Esophagus squamous epithelium (tissue), 5 donors: ENCODE measurements at regions of chr7 and their contacts with region 1.

Region 1: DNA sequence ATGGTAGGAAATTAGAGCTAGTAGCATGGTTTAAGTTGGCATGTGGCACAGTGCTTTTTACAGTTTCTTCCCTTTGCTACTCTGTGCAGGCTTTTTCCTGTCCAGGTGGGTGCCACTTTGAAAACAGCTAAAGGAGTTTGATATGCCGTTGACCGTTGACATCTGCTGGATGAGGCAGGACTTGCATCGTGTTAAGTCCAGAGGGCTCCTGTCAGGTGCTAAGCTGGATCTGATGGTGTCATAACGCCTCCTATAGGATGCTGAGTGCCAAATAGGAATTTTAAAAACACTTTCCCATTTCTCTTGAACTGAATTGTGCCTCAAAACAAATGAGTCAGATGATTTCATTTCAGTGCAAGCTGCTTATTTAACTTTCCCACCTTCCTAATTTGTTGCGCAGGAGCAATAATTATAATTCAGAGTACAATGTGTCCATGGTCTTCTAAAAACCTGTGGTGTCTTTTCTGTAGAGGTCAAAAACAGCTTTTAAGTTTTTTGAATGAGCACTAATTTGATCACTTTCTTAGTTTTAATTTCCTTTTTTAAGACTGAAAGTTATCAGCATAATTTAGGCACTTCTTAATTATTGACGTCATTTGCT is 178.3 kb downstream of the CDCA7L start:
- DNase-seq: no peak
- H3K4me3 ChIP-seq: no peak overlapping the region
- H3K27ac ChIP-seq: no peak overlapping the region
- H3K4me1 ChIP-seq: peaks cover 0 to 5% (median 0%) of the 10 kb centered on the region in 3 donors
- H3K27me3 ChIP-seq: peaks cover 0 to 13% (median 0%) of the 10 kb centered on the region in 4 donors
- CTCF ChIP-seq: peak in 5 of 6 experiments; percentile 24 to 73 (median 52)
- POLR2A ChIP-seq: no peak

Region 2: DNA sequence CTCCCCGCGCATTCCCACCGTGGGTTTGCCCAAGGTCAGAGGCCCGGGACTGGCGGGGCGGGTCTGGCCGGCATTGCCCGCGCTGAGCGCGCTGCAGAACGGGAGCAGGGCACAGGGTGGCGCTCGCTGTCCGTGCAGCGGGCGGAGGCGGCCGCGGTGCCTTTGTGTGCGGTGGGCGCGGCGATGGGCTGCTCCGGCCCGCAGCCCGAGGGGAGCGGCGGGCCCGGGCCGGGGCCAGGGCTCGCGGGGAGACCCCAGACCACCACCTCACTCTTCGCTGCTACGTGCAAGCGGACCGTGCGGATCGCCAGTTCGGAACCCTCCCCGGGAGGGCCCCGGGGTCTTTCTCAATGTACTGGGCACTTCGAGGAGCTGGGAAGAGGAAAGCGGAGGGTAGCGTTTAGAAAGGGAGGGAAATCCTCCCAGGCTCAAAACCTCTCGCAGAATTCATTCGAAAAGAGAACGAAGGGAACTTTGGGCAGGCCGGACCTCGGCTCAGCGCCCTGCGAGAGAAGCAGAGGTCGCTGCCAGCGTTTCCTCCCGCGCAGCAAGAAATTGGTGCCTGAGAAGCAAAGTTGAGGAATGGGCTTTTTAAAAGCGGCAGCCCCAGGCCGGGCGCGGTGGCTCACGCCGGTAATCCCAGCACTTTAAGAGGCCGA is 989.2 kb before region 1 on chr7:
- intact Hi-C with region 1: loop called (anchors 10 kb)
- DNase-seq: no peak
- H3K4me3 ChIP-seq: peak overlapping the region in 3 of 4 donors; percentile 10 to 58 (median 34)
- H3K27ac ChIP-seq: no peak overlapping the region
- H3K4me1 ChIP-seq: peaks cover 7 to 20% (median 8%) of the 10 kb centered on the region in 3 donors
- H3K27me3 ChIP-seq: peaks cover 8 to 100% (median 28%) of the 10 kb centered on the region in 4 donors
- CTCF ChIP-seq: peak; percentile 26 to 77 (median 44)
- POLR2A ChIP-seq: no peak

Region 3: GRCh38 chr7:21923658-21924057 is 156.3 kb after region 1 on chr7:
- intact Hi-C with region 1: no loop called
- DNase-seq: no peak
- H3K4me3 ChIP-seq: no peak overlapping the region
- H3K27ac ChIP-seq: no peak overlapping the region
- H3K4me1 ChIP-seq: peaks cover 0 to 7% (median 0%) of the 10 kb centered on the region in 3 donors
- H3K27me3 ChIP-seq: no peaks in the 10 kb centered on the region
- CTCF ChIP-seq: no peak
- POLR2A ChIP-seq: no peak